Heart left ventricle (tissue), 16 donors: ENCODE measurements at regions of chr2 and their contacts with region 1.

Region 1: GRCh38 chr2:197828464-197829135 is 24.2 kb downstream of the PLCL1 start:
- DNase-seq: no peak
- ATAC-seq: no peak
- H3K4me3 ChIP-seq: no peak overlapping the region
- H3K27ac ChIP-seq: no peak overlapping the region
- H3K4me1 ChIP-seq: peaks cover 0 to 22% (median 9%) of the 10 kb centered on the region in 12 donors
- H3K27me3 ChIP-seq: no peaks in the 10 kb centered on the region
- CTCF ChIP-seq: no peak
- POLR2A ChIP-seq: no peak

Region 2: DNA sequence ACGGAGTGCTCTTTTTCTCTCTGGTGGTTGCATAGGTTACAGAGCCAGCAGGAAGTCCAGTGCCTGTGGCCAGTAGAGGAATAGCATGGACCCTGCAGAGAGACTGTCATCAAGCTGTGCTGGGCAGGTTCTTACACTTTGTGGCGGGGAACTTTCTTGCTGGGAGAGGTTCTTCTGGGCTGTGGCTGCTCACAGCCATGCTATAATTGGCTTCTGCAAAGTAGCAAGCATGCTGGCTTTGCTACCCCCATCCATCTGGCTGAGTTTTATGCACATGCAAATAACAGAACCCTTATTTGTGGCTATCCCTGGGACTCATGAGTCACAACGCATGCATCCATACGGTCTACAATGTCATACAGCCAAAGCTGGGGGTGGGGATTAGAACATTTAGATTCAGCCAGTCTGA is 44.7 kb after region 1 on chr2:
- intact Hi-C with region 1: loop called in 1 of 10 experiments (anchors 10 kb)
- DNase-seq: peak in 3 of 5 donors; percentile 16 to 35 (median 27)
- ATAC-seq: peak; percentile 35 to 83 (median 72)
- H3K4me3 ChIP-seq: no peak overlapping the region
- H3K27ac ChIP-seq: peak overlapping the region in 6 of 12 donors; percentile 8 to 33 (median 29)
- H3K4me1 ChIP-seq: peaks cover 0 to 81% (median 40%) of the 10 kb centered on the region in 12 donors
- H3K27me3 ChIP-seq: no peaks in the 10 kb centered on the region
- CTCF ChIP-seq: peak in 1 of 12 donors; percentile 14
- POLR2A ChIP-seq: no peak

Region 3: GRCh38 chr2:198004921-198005829 is 176.6 kb after region 1 on chr2:
- intact Hi-C with region 1: no loop called
- DNase-seq: peak in 1 of 5 donors; percentile 64
- ATAC-seq: peak in 3 of 4 donors; percentile 50 to 78 (median 57)
- H3K4me3 ChIP-seq: no peak overlapping the region
- H3K27ac ChIP-seq: peak overlapping the region in 2 of 12 donors; percentile 11 to 22
- H3K4me1 ChIP-seq: peaks cover 0 to 32% (median 11%) of the 10 kb centered on the region in 12 donors
- H3K27me3 ChIP-seq: no peaks in the 10 kb centered on the region
- CTCF ChIP-seq: no peak
- POLR2A ChIP-seq: no peak